ENCODE measurements at regions of chr17 and their contacts with region 1.

Region 1: GRCh38 chr17:2192367-2193057 is 111.1 kb downstream of the SMG6 start:
- DNase-seq: peak; percentile 69
- ATAC-seq: peak; percentile 57
- H3K4me3 Mint-ChIP-seq: no peak overlapping the region
- H3K27ac Mint-ChIP-seq: peak overlapping the region; percentile 61
- H3K4me1 Mint-ChIP-seq: peaks cover 47% of the 10 kb centered on the region
- H3K27me3 Mint-ChIP-seq: no peaks in the 10 kb centered on the region

Region 2: GRCh38 chr17:2215616-2216364 is 23.3 kb after region 1 on chr17:
- CTCF ChIA-PET with region 1: interaction called, 5 read pairs
- POLR2A ChIA-PET with region 1: interaction called, 4 read pairs
- intact Hi-C with region 1: loop called in 1 of 2 experiments (anchors 2 kb)
- DNase-seq: peak; percentile 85
- ATAC-seq: peak; percentile 97
- H3K4me3 Mint-ChIP-seq: peak overlapping the region; percentile 74
- H3K27ac Mint-ChIP-seq: peak overlapping the region; percentile 96
- H3K4me1 Mint-ChIP-seq: peaks cover 58% of the 10 kb centered on the region
- H3K27me3 Mint-ChIP-seq: no peaks in the 10 kb centered on the region